Dorsolateral prefrontal cortex (tissue), 120 donors: ENCODE measurements at regions of chr6 and their contacts with region 1.

Region 1: GRCh38 chr6:34196126-34196830 is 40.4 kb upstream of the HMGA1 start:
- DNase-seq: peak; percentile 78 to 92 (median 85)
- H3K4me3 ChIP-seq: peak overlapping the region; percentile 47 to 85 (median 64)
- H3K27ac ChIP-seq: peak overlapping the region in 7 of 59 donors; percentile 4 to 75 (median 70)
- H3K27me3 ChIP-seq: no peaks in the 10 kb centered on the region
- CTCF ChIP-seq: peak; percentile 78 to 100 (median 97)

Region 2: DNA sequence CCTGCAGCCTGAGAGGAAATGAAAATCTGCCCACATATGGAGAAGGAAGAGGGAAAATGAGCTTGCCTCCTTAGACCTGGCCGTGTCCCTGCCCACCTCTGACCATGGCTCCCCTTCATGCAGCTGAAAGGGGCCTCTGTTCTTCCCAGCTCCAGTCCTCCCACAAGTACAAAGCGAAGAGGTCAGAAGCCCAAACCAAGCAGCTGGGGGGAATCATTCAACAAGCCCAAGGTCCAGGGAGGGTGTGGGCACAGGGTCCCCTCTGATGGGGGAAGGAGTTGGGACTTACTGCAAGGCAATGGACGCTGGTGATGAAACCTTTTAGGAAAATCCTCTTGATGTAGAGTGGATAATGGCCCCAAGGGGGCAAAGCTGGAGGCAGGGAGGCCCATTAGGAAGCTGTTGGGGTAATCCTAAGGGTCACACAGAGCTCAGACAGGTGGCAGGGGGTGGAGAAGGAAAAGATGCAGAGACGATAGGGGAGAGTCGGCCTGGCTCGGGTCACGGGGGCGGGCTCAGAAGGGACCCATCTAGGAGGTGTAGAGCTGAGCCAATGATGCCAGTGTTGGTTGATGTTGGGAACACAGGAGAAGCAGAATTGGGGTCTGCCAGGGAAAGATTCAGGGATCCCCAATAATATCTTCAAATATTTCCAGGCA is 34.3 kb before region 1 on chr6:
- intact Hi-C with region 1: loop called in 1 of 2 experiments (anchors 2 kb)
- DNase-seq: peak in 3 of 10 donors; percentile 11 to 18 (median 15)
- H3K4me3 ChIP-seq: no peak overlapping the region
- H3K27ac ChIP-seq: no peak overlapping the region
- H3K27me3 ChIP-seq: no peaks in the 10 kb centered on the region
- CTCF ChIP-seq: no peak

Region 3: DNA sequence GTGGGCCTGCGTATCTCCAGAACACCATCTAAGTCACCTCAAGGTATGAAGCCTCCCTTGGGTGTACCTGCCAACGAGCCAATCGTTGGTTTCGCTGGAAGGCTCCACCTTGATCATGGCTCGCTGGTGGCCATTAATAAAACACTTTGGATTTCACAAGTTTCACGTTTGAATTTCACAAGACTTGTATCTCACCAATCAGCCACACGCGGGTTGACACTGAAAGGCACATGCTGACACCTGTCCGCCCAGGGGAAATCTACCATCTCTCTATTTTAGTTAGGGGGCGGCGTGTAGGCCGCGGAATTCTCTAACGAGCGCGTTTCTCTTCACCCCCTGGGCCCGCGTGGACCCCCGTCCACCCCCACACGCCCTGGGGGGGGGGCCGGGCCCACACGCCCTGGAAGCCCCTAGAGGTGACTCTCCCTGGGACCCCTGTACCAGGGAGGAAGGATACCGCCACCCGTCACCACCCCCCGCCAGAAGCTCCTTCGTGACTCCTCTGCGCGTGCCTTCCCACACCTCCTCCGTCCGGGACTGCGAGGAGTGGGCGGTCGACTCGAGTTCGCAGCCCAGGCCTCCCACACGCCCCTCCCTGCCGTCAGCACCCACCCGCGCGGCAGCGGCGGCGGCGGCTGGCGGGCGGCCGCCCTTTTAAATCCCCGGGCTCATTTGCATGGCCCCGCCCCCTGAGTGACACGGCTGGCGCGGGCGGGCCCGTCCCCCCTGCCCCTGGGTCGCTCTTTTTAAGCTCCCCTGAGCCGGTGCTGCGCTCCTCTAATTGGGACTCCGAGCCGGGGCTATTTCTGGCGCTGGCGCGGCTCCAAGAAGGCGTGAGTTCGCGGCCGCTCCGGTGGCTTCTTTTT is 40.1 kb after region 1 on chr6 and contains the start of gene HMGA1:
- intact Hi-C with region 1: loop called in 1 of 2 experiments (anchors 2 kb)
- DNase-seq: peak; percentile 76 to 89 (median 85)
- H3K4me3 ChIP-seq: peak within 1 kb of the TSS; percentile 69 to 93 (median 81)
- H3K27ac ChIP-seq: peak within 1 kb of the TSS; percentile 79 to 97 (median 93)
- H3K27me3 ChIP-seq: no peaks in the 10 kb centered on the region
- CTCF ChIP-seq: peak in 6 of 56 donors; percentile 5 to 36 (median 18)
- total RNA-seq, gene HMGA1: 33.1 to 85.0 (median 58.3) TPM

Region 4: DNA sequence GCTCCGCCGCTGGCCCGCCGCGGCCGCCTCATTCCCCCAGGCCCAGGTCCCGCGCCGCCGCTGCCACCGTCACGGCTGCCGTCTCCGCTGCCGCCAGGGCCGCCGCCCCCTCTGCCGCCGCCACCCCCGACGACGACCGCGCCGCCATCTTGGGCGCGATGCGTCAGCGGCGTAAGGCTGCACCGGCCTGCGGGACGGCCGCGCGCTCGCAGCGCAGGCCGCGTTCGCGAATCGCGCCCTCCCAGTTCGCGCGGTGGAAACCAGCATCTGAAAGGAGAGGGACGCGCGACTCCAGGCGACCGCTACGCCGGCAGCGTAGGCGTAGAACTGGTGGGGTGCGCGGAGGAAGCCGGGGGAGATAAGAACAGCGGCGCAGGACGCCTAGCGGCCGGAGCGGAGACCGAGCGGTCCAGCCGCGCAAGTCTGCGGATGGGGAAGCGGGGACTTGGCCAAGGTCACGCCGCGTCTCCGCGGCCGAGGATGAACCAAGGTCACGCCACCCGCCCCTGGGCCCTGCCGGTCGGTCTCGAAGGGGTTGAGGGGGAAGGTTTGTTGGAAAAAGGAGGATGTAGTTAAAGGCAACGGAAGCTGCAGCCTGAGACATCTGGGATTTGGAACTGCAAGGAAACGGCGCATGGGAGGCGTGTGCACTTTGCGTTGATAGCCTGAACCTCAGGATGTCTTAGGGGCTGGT is 196.4 kb after region 1 on chr6 and contains the start of gene NUDT3:
- intact Hi-C with region 1: loop called in 1 of 2 experiments (anchors 2 kb)
- DNase-seq: peak; percentile 88 to 96 (median 94)
- H3K4me3 ChIP-seq: peak within 1 kb of the TSS; percentile 70 to 97 (median 88)
- H3K27ac ChIP-seq: peak within 1 kb of the TSS; percentile 84 to 99 (median 97)
- H3K27me3 ChIP-seq: no peaks in the 10 kb centered on the region
- CTCF ChIP-seq: peak; percentile 64 to 92 (median 84)
- total RNA-seq, gene NUDT3: 107 to 239 (median 169) TPM

Region 5: GRCh38 chr6:34608321-34609091 is 412.2 kb after region 1 on chr6:
- intact Hi-C with region 1: loop called in 1 of 2 experiments (anchors 2 kb)
- DNase-seq: no peak
- H3K4me3 ChIP-seq: no peak overlapping the region
- H3K27ac ChIP-seq: peak overlapping the region in 34 of 59 donors; percentile 0 to 81 (median 46)
- H3K27me3 ChIP-seq: no peaks in the 10 kb centered on the region
- CTCF ChIP-seq: no peak